ENCODE measurements at regions of chr14 and their contacts with region 1.

Region 1: DNA sequence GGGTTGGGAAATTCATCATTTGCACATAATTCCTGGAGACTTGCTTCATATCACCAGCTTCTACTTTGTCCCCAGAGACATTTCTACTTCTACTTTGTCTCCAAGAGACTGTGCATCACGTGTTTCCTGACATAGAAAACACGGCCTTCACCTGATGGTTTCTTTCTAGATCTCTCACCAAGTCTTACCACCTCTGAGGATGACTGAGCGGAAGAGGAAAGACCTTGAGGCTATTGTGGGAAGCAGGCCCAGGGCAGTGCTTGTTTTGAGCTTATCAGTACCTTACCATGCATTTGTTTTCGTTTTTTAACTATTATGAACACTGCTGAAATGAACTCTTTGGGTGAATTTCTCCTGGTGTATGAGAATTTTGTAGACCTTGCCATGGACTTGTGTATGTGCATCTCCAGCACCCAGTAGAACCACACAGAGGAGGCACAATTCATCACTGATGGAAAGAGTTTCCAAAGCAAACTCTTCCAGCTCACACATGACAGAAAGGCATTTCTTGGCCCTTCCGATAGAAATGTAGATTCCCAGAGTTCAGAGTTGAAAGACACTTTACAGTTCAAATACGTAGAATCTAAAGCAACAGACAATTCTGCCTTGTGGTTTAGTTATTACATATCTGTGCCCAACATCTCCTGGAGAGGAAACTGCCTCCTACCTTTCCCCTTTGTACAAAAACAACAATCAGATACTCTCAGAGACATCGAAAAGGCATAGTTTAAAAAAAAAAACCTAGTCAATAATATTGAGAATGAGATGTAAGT is 434.7 kb downstream of the FUT8 start:
- DNase-seq: peak; percentile 86
- H3K4me3 Mint-ChIP-seq: peak overlapping the region; percentile 22
- H3K27ac Mint-ChIP-seq: peak overlapping the region; percentile 79
- H3K4me1 Mint-ChIP-seq: peaks cover 66% of the 10 kb centered on the region
- H3K27me3 Mint-ChIP-seq: no peaks in the 10 kb centered on the region

Region 2: GRCh38 chr14:65102441-65103149 is 744.7 kb before region 1 on chr14 and contains the start of gene MAX:
- CTCF ChIA-PET with region 1: interaction called, 3 read pairs
- POLR2A ChIA-PET with region 1: no interaction called
- intact Hi-C with region 1: loop called (anchors 5 kb)
- DNase-seq: peak; percentile 99
- H3K4me3 Mint-ChIP-seq: peak within 1 kb of the TSS; percentile 96
- H3K27ac Mint-ChIP-seq: peak within 1 kb of the TSS; percentile 93
- H3K4me1 Mint-ChIP-seq: peaks cover 34% of the 10 kb centered on the region
- H3K27me3 Mint-ChIP-seq: no peaks in the 10 kb centered on the region
- total RNA-seq, gene MAX: 74.5 to 80.7 TPM

Region 3: GRCh38 chr14:65631040-65631439 is 216.2 kb before region 1 on chr14:
- CTCF ChIA-PET with region 1: no interaction called
- POLR2A ChIA-PET with region 1: no interaction called
- intact Hi-C with region 1: no loop called
- DNase-seq: no peak
- H3K4me3 Mint-ChIP-seq: no peak overlapping the region
- H3K27ac Mint-ChIP-seq: no peak overlapping the region
- H3K4me1 Mint-ChIP-seq: peaks cover 11% of the 10 kb centered on the region
- H3K27me3 Mint-ChIP-seq: no peaks in the 10 kb centered on the region

Region 4: DNA sequence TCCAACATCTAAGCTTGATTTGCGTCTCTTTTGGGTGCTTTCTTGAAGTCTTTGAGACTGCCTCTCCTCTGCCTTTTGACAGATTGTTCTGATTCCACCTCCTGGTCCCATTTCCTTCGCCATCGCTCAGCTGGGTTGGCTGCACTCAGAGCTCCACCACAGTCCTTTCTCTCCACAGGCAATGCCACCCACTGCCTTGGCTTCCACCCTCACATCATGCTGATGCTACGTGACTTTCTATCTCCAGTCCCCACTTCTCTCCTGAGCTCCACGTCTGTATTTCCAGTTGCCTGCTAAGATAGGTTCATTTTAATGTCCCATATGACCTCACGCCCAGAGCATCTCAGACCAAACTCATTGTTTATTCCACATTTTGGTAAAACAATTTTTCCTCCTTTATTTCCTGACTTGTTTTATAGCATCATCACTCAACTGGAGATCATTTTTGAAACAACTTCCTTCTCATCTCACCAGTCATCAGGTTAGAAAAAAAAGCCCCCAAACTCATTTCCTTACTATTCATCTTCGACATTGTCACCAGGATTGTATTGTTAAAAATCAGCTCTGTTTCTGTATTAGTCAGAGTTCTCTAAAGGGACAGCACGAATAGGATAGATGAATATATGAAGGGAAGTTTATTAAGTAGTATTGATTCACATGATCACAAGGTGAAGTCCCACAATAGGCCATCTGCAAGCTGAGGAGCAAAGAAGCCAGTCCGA is 42.3 kb before region 1 on chr14:
- CTCF ChIA-PET with region 1: no interaction called
- POLR2A ChIA-PET with region 1: interaction called, 3 read pairs
- intact Hi-C with region 1: loop called (anchors 2 kb)
- DNase-seq: peak; percentile 26
- H3K4me3 Mint-ChIP-seq: no peak overlapping the region
- H3K27ac Mint-ChIP-seq: no peak overlapping the region
- H3K4me1 Mint-ChIP-seq: peaks cover 8% of the 10 kb centered on the region
- H3K27me3 Mint-ChIP-seq: no peaks in the 10 kb centered on the region

Region 5: GRCh38 chr14:65879248-65880009 is 32.2 kb after region 1 on chr14:
- CTCF ChIA-PET with region 1: no interaction called
- POLR2A ChIA-PET with region 1: interaction called, 4 read pairs
- intact Hi-C with region 1: loop called (anchors 1 kb)
- DNase-seq: peak; percentile 15
- H3K4me3 Mint-ChIP-seq: no peak overlapping the region
- H3K27ac Mint-ChIP-seq: peak overlapping the region; percentile 71
- H3K4me1 Mint-ChIP-seq: peaks cover 44% of the 10 kb centered on the region
- H3K27me3 Mint-ChIP-seq: no peaks in the 10 kb centered on the region

Region 6: GRCh38 chr14:65927931-65928356 is 80.7 kb after region 1 on chr14:
- CTCF ChIA-PET with region 1: interaction called, 5 read pairs
- POLR2A ChIA-PET with region 1: interaction called, 8 read pairs
- intact Hi-C with region 1: loop called (anchors 1 kb)
- DNase-seq: peak; percentile 92
- H3K4me3 Mint-ChIP-seq: peak overlapping the region; percentile 18
- H3K27ac Mint-ChIP-seq: peak overlapping the region; percentile 43
- H3K4me1 Mint-ChIP-seq: peaks cover 51% of the 10 kb centered on the region
- H3K27me3 Mint-ChIP-seq: peaks cover 2% of the 10 kb centered on the region

Region 7: GRCh38 chr14:65949711-65950516 is 102.7 kb after region 1 on chr14:
- CTCF ChIA-PET with region 1: no interaction called
- POLR2A ChIA-PET with region 1: no interaction called
- intact Hi-C with region 1: loop called (anchors 1 kb)
- DNase-seq: peak; percentile 73
- H3K4me3 Mint-ChIP-seq: no peak overlapping the region
- H3K27ac Mint-ChIP-seq: peak overlapping the region; percentile 84
- H3K4me1 Mint-ChIP-seq: peaks cover 35% of the 10 kb centered on the region
- H3K27me3 Mint-ChIP-seq: peaks cover 9% of the 10 kb centered on the region